Activated CD4-positive, alpha-beta T cell treated with anti-CD3 and anti-CD28 coated beads for 36 hours (primary cell): ENCODE measurements at regions of chr17 and their contacts with region 1.

Region 1: DNA sequence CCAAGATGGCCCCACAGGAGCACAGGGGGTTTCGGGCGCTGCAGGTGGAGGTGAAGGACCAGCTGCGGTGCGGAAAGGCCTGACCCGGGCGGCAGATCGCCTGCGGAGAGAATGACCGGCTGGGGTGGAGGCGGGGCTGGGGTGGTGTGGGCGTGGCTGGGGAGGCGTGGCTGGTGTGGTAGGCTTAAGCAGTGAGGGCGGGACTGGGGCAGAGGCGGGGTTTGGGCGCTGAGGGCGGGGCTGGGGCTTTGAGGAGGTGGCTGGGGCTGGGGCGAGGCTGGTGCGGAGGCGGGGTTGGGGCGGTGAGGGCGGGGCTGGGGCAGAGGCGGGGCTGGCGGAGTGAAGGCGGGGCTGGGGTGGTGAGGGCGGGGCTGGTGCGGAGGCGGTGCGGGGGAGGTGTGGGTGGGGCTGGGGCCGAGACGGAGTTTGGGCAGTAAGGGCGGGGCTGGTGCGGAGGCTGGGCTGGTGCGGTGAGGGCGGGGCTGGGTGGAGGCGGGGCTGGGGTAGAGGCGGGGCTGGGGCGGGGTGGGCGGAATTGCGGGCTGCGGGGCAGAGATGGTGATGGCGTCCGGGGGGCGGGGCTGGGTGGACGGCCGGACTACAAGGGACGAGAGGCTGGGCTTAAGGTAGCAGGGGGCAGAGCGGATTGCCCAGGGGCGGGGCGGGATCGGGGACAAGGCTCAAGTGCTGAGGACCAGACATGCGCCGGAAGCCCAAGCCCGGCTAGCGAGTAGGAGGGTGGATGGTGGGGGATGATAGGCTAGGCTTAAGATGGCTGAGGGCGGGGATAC is 9.9 kb upstream of the GSDMA start:
- DNase-seq: peak; percentile 98
- ATAC-seq: peak; percentile 87
- H3K4me3 Mint-ChIP-seq: peak overlapping the region; percentile 73
- H3K27ac Mint-ChIP-seq: peak overlapping the region; percentile 69
- H3K4me1 Mint-ChIP-seq: peaks cover 12% of the 10 kb centered on the region
- H3K27me3 Mint-ChIP-seq: no peaks in the 10 kb centered on the region

Region 2: GRCh38 chr17:39730095-39730921 is 222.6 kb before region 1 on chr17 and contains the start of gene MIEN1:
- CTCF ChIA-PET with region 1: interaction called, 3 read pairs
- POLR2A ChIA-PET with region 1: no interaction called
- intact Hi-C with region 1: loop called in 1 of 2 experiments (anchors 1 kb)
- DNase-seq: peak; percentile 97
- ATAC-seq: peak; percentile 92
- H3K4me3 Mint-ChIP-seq: peak within 1 kb of the TSS; percentile 90
- H3K27ac Mint-ChIP-seq: peak within 1 kb of the TSS; percentile 88
- H3K4me1 Mint-ChIP-seq: peaks cover 15% of the 10 kb centered on the region
- H3K27me3 Mint-ChIP-seq: no peaks in the 10 kb centered on the region
- total RNA-seq, gene MIEN1: 32.5 to 39.4 TPM